ENCODE measurements at regions of chr1 and their contacts with region 1.

Region 1: GRCh38 chr1:58739856-58740466 is 40.1 kb upstream of the MYSM1 start:
- DNase-seq: no peak
- H3K4me3 Mint-ChIP-seq: no peak overlapping the region
- H3K27ac Mint-ChIP-seq: no peak overlapping the region
- H3K4me1 Mint-ChIP-seq: peaks cover 16% of the 10 kb centered on the region
- H3K27me3 Mint-ChIP-seq: peaks cover 4% of the 10 kb centered on the region

Region 2: GRCh38 chr1:58768971-58769808 is 29.2 kb after region 1 on chr1:
- intact Hi-C with region 1: loop called (anchors 1 kb)
- DNase-seq: no peak
- H3K4me3 Mint-ChIP-seq: no peak overlapping the region
- H3K27ac Mint-ChIP-seq: no peak overlapping the region
- H3K4me1 Mint-ChIP-seq: peaks cover 12% of the 10 kb centered on the region
- H3K27me3 Mint-ChIP-seq: peaks cover 3% of the 10 kb centered on the region

Region 3: GRCh38 chr1:58941471-58942289 is 201.7 kb after region 1 on chr1:
- intact Hi-C with region 1: no loop called
- DNase-seq: peak; percentile 38
- H3K4me3 Mint-ChIP-seq: no peak overlapping the region
- H3K27ac Mint-ChIP-seq: peak overlapping the region; percentile 77
- H3K4me1 Mint-ChIP-seq: peaks cover 52% of the 10 kb centered on the region
- H3K27me3 Mint-ChIP-seq: no peaks in the 10 kb centered on the region

Region 4: GRCh38 chr1:59759156-59759925 is 1019.4 kb after region 1 on chr1:
- intact Hi-C with region 1: loop called (anchors 2 kb)
- DNase-seq: peak; percentile 56
- H3K4me3 Mint-ChIP-seq: no peak overlapping the region
- H3K27ac Mint-ChIP-seq: no peak overlapping the region
- H3K4me1 Mint-ChIP-seq: peaks cover 2% of the 10 kb centered on the region
- H3K27me3 Mint-ChIP-seq: no peaks in the 10 kb centered on the region